A549 (cell line): ENCODE measurements at regions of chr12 and their contacts with region 1.

Region 1: DNA sequence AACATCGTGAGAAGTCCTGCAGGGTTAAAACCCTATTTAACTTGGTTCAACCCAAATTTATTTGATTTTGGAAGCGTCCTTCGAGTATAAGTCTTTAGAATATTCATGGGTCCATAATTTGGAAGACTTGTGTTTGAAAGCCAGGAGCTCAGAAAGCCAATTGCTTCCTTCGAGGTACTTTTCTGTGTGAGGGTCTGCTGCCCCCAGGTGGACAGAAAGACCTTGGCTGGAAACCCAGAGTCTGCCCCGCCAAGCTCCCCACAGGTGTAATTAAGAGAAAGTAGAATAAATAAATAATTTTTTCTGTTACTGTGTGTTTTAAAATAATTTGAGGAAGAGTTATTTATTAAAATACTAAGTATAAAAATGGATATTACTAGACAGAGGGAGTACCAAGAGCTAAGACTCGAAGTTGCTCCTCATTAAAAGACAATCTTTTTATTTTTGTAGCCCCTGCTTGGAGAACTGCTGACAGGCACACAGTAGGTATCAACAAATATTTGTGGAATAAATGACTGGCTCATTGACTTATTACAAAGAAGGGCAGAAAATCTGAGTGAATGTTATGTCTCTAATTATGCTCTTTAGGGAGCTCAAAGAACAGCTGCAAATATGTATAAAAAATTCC is 105.8 kb downstream of the PAH start:
- DNase-seq: peak; percentile 38 to 51
- ATAC-seq: peak; percentile 58 to 87; a peak in 4 of 6 replicates
- H3K4me3 ChIP-seq: no peak overlapping the region
- H3K27ac ChIP-seq: no peak overlapping the region
- H3K4me1 ChIP-seq: no peaks in the 10 kb centered on the region
- CTCF ChIP-seq: peak; percentile 75
- EP300 ChIP-seq: no peak
- POLR2A ChIP-seq: no peak
- RAD21 ChIP-seq: peak; percentile 76 to 82

Region 2: GRCh38 chr12:101947316-101947715 is 863.9 kb before region 1 on chr12:
- CTCF ChIA-PET with region 1: interaction called, 26 read pairs
- POLR2A ChIA-PET with region 1: no interaction called
- DNase-seq: no peak
- ATAC-seq: no peak
- H3K4me3 ChIP-seq: no peak overlapping the region
- H3K27ac ChIP-seq: no peak overlapping the region
- H3K4me1 ChIP-seq: no peaks in the 10 kb centered on the region
- CTCF ChIP-seq: no peak
- EP300 ChIP-seq: no peak
- POLR2A ChIP-seq: no peak
- RAD21 ChIP-seq: no peak

Region 3: GRCh38 chr12:102593128-102593527 is 218.1 kb before region 1 on chr12:
- CTCF ChIA-PET with region 1: no interaction called
- POLR2A ChIA-PET with region 1: no interaction called
- DNase-seq: no peak
- ATAC-seq: no peak
- H3K4me3 ChIP-seq: no peak overlapping the region
- H3K27ac ChIP-seq: no peak overlapping the region
- H3K4me1 ChIP-seq: no peaks in the 10 kb centered on the region
- CTCF ChIP-seq: no peak
- EP300 ChIP-seq: no peak
- POLR2A ChIP-seq: no peak
- RAD21 ChIP-seq: no peak